ENCODE measurements at regions of chr11 and their contacts with region 1.

Region 1: GRCh38 chr11:114340311-114341131 is 44.3 kb downstream of the NNMT start:
- DNase-seq: peak; percentile 49 to 71
- H3K4me3 ChIP-seq: peak overlapping the region; percentile 15 to 24
- H3K27ac ChIP-seq: peak overlapping the region in 1 of 2 donors; percentile 37
- H3K4me1 ChIP-seq: peaks cover 0 to 11% (median 5%) of the 10 kb centered on the region in 4 donors
- H3K27me3 ChIP-seq: no peaks in the 10 kb centered on the region
- CTCF ChIP-seq: peak; percentile 82 to 84

Region 2: DNA sequence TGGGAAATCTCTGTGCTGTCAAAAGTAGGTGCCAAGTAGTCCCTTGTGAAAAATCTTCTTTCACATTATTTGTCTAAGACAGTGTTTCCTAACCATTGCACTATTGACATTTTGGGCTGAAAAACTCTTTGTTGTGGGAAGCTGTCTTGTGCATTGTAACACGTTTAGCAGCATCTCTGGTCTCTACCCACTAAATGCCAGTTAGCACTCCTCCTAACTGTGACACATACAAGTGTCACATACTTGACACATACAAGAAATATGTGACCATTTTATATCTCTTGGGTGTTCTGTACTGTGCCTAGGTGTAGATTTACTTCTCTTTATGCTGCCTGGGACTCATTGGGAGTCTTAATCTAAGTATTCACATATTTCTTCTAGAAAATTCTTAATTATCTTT is 161.4 kb after region 1 on chr11:
- intact Hi-C with region 1: no loop called
- DNase-seq: no peak
- H3K4me3 ChIP-seq: no peak overlapping the region
- H3K27ac ChIP-seq: no peak overlapping the region
- H3K4me1 ChIP-seq: no peaks in the 10 kb centered on the region
- H3K27me3 ChIP-seq: no peaks in the 10 kb centered on the region
- CTCF ChIP-seq: no peak

Region 3: GRCh38 chr11:114738954-114739353 is 398.4 kb after region 1 on chr11:
- intact Hi-C with region 1: loop called (anchors 2 kb)
- DNase-seq: no peak
- H3K4me3 ChIP-seq: no peak overlapping the region
- H3K27ac ChIP-seq: no peak overlapping the region
- H3K4me1 ChIP-seq: no peaks in the 10 kb centered on the region
- H3K27me3 ChIP-seq: no peaks in the 10 kb centered on the region
- CTCF ChIP-seq: peak; percentile 54 to 73

Measured in tibial artery (tissue), 4 donors.